ENCODE measurements at regions of chr3 and their contacts with region 1.

Region 1: GRCh38 chr3:188749010-188749617 is 422.7 kb upstream of the TPRG1 start:
- DNase-seq: peak; percentile 9
- H3K4me3 ChIP-seq: no peak overlapping the region
- H3K27ac ChIP-seq: no peak overlapping the region
- H3K4me1 ChIP-seq: no peaks in the 10 kb centered on the region
- H3K27me3 ChIP-seq: no peaks in the 10 kb centered on the region
- CTCF ChIP-seq: peak; percentile 53 to 56
- POLR2A ChIP-seq: no peak

Region 2: DNA sequence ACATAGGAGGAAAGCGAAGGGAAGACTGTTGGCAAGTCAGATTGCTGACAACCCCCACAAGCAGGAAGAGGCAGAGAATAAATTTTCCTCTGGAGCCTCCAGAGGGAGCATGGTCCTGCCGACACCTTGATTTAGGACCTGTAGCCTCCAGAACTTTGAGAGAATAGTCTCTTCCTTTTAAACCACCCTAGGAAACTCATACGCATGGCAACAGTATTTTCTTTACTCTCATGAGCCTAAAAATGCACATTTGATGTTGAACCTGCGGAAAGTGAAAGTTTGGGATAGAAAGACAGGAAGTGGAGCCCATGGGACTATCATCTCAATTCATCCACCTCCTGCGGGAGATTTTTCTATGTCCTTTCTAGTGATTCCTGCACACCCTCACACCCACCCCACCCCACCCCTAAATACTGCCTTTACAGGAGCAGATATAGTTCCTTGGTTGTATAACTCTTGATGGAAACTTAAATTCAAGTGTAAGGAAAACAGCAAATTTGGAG is 711.8 kb before region 1 on chr3:
- CTCF ChIA-PET with region 1: no interaction called
- POLR2A ChIA-PET with region 1: no interaction called
- dilution Hi-C with region 1: no loop called
- intact Hi-C with region 1: loop called (anchors 10 kb)
- DNase-seq: peak; percentile 43
- H3K4me3 ChIP-seq: no peak overlapping the region
- H3K27ac ChIP-seq: no peak overlapping the region
- H3K4me1 ChIP-seq: no peaks in the 10 kb centered on the region
- H3K27me3 ChIP-seq: peaks cover 0 to 2% of the 10 kb centered on the region in 2 experiments
- CTCF ChIP-seq: peak in 1 of 2 donors; percentile 44
- POLR2A ChIP-seq: no peak

Region 3: DNA sequence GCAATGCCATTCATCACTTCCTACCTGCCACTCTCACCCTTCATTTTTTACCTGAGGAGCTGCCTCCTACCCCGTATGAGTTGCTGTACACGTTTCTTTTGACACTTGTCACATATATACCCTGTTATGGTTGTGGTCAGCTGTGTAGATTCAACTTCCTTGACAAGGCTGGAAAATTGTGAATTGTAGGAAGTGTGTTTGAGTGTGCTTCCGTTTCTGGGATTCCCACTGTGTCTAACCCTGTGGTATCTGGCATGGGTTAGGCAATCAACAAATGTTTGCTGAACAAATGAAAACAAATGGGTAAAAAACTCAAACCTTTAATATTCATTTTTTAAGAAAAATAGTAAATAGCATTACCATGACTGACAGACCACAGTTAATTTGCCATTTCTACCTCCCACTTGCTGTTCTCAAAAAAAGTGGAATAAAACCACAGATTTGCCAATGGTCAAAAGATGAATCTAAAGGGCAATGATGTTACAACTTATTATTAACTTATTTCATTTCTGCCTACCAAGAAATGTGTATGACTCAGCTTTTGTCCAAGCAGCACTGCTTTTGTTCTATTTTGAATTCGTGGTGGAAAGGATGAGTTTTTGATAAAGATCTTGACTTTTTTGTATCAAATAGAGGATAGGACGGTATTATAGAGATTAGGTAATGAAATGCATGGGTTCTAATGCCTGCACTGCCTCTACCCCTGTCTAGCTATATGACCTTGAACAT is 190.6 kb before region 1 on chr3:
- CTCF ChIA-PET with region 1: no interaction called
- POLR2A ChIA-PET with region 1: no interaction called
- dilution Hi-C with region 1: no loop called
- intact Hi-C with region 1: loop called (anchors 5 kb)
- DNase-seq: peak; percentile 64
- H3K4me3 ChIP-seq: no peak overlapping the region
- H3K27ac ChIP-seq: peak overlapping the region; percentile 69
- H3K4me1 ChIP-seq: peaks cover 25% of the 10 kb centered on the region
- H3K27me3 ChIP-seq: no peaks in the 10 kb centered on the region
- CTCF ChIP-seq: no peak
- POLR2A ChIP-seq: no peak

Region 4: DNA sequence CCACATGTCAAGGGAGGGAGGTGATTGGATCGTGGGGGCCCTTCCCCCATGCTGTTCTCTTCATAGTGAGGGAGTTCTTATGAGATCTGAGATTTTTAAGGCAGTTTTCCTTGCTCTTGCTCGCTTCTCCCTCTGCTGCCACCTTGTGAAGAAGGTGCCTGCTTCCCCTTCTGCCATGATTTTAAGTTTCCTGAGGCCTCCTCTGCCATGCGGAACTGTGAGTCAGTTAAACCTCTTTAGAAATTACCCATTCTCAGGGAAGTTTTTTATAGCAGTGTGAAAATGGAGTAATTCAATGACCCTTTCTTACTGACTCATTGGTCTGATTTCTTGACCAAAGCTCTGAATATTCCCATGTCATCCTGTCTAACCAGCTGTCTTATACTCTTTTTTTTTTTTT is 61.7 kb before region 1 on chr3:
- CTCF ChIA-PET with region 1: no interaction called
- POLR2A ChIA-PET with region 1: no interaction called
- dilution Hi-C with region 1: no loop called
- intact Hi-C with region 1: no loop called
- DNase-seq: peak; percentile 6
- H3K4me3 ChIP-seq: no peak overlapping the region
- H3K27ac ChIP-seq: no peak overlapping the region
- H3K4me1 ChIP-seq: peaks cover 7% of the 10 kb centered on the region
- H3K27me3 ChIP-seq: no peaks in the 10 kb centered on the region
- CTCF ChIP-seq: no peak
- POLR2A ChIP-seq: no peak